Dorsolateral prefrontal cortex (tissue), 120 donors: ENCODE measurements at regions of chr7 and their contacts with region 1.

Region 1: DNA sequence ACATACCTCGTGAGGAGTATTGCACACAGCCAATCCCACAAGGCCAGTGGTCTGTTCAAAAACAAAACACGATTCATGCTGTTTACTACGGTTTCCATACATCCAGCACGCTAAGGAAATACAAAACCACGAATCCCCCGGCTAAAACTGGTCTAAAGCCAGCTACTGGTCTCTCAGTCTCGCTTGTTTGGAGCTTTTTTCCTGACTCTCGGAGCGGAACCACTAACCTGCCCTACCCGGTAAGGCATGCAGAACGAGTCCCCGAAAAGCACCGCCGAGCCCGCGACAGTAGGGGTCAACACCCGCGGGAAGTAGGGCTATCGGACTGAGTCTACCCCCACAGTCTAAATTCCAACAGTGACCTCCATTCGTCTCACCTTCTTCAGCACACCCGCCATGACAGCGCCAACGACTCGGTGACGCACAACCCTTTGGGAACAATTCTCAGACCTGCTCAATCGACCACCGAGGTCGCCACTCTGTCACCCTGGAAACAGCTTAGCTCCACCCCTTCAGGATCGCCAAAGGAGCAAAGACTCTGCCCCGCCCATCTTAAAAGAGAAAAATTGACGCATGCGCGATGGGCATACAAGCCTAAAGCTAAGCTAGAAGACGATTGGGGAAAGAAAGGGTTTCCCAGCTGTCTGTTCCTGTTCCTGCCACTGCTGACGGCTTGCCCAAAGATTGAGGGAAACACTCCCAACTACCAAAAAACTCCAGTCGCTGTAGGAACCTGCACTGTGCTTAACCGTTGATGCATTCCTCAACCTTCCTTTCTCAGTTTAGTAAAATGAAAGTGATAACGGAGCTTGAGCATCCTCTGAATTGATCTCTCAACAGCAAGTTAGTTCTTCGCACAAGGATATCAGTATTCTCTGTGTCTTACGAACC is at the start of gene NDUFA5:
- DNase-seq: peak; percentile 91 to 99 (median 98)
- H3K4me3 ChIP-seq: peak within 1 kb of the TSS; percentile 61 to 99 (median 91)
- H3K27ac ChIP-seq: peak within 1 kb of the TSS; percentile 18 to 95 (median 86)
- H3K27me3 ChIP-seq: no peaks in the 10 kb centered on the region
- CTCF ChIP-seq: peak in 24 of 56 donors; percentile 0 to 50 (median 24)
- total RNA-seq, gene NDUFA5: 77.3 to 258 (median 186) TPM

Region 2: DNA sequence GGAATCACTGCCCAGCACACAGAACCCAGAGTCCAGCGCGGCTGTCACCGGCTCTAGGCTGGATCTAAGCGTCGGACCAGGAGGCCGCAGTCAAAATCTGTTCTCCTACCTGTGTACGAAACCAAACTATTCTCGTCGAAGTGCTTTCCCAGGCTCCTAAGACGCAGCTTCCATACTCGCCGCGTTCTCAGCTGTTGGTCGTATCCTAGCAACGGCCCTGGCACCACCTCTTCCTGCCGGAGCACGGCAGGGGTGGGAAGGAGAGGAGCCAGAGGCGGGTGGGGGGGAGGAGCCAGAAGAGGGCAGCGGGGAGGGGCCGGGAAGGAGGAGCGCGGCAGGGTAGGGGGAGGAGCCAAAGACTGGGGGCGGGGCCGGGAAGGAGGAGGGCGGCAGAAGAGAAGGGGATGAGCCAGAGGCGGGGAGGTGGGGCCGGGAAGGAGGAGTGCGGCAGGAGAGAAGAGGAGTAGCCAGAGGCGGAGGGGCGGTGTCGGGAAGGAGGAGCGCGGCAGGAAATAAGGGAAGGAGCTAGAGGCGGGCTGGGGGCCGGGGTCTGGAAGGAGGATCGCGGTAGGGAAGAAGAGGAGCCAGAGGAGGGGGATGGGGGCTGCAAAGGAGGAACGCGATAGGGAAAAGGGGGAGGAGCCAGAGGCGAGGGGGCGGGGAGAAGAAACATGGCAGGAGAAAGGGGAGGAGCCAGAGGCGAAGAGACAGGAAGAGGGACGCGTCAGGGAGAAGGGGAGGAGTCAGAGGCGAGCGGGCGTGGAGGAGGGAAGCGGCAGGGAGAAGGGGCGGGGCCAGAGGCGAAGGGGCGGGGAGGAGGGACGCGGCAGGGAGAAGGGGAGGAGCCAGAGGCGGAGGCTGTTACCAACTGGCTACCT is 23.0 kb before region 1 on chr7 and contains the start of gene IQUB:
- intact Hi-C with region 1: loop called in 1 of 2 experiments (anchors 2 kb)
- DNase-seq: peak; percentile 90 to 97 (median 96)
- H3K4me3 ChIP-seq: peak within 1 kb of the TSS; percentile 41 to 82 (median 71)
- H3K27ac ChIP-seq: peak within 1 kb of the TSS in 52 of 59 donors; percentile 4 to 89 (median 74)
- H3K27me3 ChIP-seq: no peaks in the 10 kb centered on the region
- CTCF ChIP-seq: peak in 7 of 56 donors; percentile 3 to 46 (median 15)
- total RNA-seq, gene IQUB: 2.3 to 9.4 (median 5.3) TPM

Region 3: GRCh38 chr7:123594813-123595241 is 37.2 kb after region 1 on chr7:
- intact Hi-C with region 1: no loop called
- DNase-seq: no peak
- H3K4me3 ChIP-seq: no peak overlapping the region
- H3K27ac ChIP-seq: no peak overlapping the region
- H3K27me3 ChIP-seq: peaks cover 0 to 5% (median 0%) of the 10 kb centered on the region in 45 donors
- CTCF ChIP-seq: no peak

Region 4: DNA sequence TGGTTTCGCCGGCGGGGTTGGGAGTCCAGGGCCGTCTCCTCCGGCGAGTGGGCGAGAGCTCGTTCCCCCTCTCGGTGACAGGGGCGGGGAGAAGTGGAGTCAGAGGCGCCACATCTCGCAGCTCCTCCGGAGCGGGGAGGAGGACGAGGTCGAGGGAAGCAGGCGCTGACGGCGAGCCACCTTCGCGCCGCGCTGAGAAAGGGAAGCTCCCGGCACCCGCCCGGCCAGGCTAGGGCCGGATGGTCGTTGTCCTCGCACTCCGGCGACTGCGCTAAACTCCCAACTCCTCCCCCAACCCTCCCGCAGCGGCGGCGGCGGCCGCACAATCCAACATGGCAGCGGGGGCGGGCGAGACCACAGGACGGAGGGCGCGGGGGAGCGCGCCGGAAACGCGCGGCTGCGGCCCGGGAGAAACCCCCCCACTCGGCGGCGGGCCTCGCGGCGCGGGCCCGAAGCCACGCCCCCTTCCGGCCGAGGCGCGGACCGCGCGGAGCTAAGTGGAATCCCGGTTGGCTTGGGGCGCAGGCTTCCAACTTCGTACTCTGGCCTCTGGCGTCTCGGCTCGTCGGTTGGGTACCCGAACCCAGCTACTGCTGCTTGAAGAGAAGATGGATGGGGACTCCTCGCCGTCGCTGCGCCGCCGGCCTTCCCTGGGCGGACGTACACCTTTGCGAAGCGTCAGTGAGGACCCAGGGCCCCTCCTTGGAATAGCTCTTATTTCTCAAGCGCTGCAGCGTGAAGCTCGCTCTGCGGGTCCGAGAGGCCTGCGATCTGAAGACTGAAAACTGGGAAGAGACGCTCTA is 191.3 kb after region 1 on chr7 and contains the start of gene WASL:
- intact Hi-C with region 1: loop called in 1 of 2 experiments (anchors 5 kb)
- DNase-seq: peak; percentile 80 to 94 (median 88)
- H3K4me3 ChIP-seq: peak within 1 kb of the TSS; percentile 64 to 98 (median 89)
- H3K27ac ChIP-seq: peak within 1 kb of the TSS; percentile 61 to 99 (median 95)
- H3K27me3 ChIP-seq: no peaks in the 10 kb centered on the region
- CTCF ChIP-seq: peak in 51 of 56 donors; percentile 15 to 86 (median 54)
- total RNA-seq, gene WASL: 41.1 to 88.3 (median 68.7) TPM

Region 5: GRCh38 chr7:124929467-124930172 is 1372.0 kb after region 1 on chr7 and contains the start of gene POT1:
- intact Hi-C with region 1: loop called in 1 of 2 experiments (anchors 10 kb)
- DNase-seq: peak; percentile 98 to 100 (median 99)
- H3K4me3 ChIP-seq: peak within 1 kb of the TSS; percentile 28 to 93 (median 80)
- H3K27ac ChIP-seq: peak within 1 kb of the TSS; percentile 46 to 96 (median 88)
- H3K27me3 ChIP-seq: no peaks in the 10 kb centered on the region
- CTCF ChIP-seq: peak in 21 of 56 donors; percentile 9 to 49 (median 22)
- total RNA-seq, gene POT1: 16.0 to 44.3 (median 29.0) TPM